ENCODE measurements at regions of chr12 and their contacts with region 1.

Region 1: DNA sequence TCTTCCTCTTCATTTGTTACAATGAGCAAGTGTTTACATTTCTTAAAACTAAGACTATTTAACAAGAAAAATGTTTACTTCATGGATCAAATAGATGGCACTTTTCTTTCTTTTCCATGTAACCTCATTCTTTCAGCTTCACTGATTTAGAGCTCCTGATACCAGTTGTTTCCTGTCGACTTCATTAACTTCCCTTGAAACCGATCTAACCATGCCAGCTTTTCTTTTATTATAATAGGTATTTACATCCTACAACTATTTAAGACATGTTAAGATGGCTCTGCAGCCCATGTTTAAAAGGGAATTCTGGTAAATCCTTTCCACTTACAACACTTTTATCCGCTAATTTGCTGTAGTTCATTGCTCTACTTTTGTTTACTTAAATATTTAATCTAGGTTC is 107.3 kb upstream of the DCN start:
- DNase-seq: no peak
- H3K4me3 ChIP-seq: no peak overlapping the region
- H3K4me3 Mint-ChIP-seq: no peak overlapping the region
- H3K27ac Mint-ChIP-seq: no peak overlapping the region
- H3K4me1 ChIP-seq: no peaks in the 10 kb centered on the region
- H3K4me1 Mint-ChIP-seq: no peaks in the 10 kb centered on the region
- H3K27me3 ChIP-seq: no peaks in the 10 kb centered on the region
- H3K27me3 Mint-ChIP-seq: no peaks in the 10 kb centered on the region
- CTCF ChIP-seq: no peak

Region 2: GRCh38 chr12:91326058-91327027 is 36.4 kb after region 1 on chr12:
- CTCF ChIA-PET with region 1: no interaction called
- POLR2A ChIA-PET with region 1: no interaction called
- intact Hi-C with region 1: loop called (anchors 5 kb)
- DNase-seq: peak; percentile 38 to 64
- H3K4me3 ChIP-seq: no peak overlapping the region
- H3K4me3 Mint-ChIP-seq: no peak overlapping the region
- H3K27ac Mint-ChIP-seq: no peak overlapping the region
- H3K4me1 ChIP-seq: no peaks in the 10 kb centered on the region
- H3K4me1 Mint-ChIP-seq: no peaks in the 10 kb centered on the region
- H3K27me3 ChIP-seq: no peaks in the 10 kb centered on the region
- H3K27me3 Mint-ChIP-seq: no peaks in the 10 kb centered on the region
- CTCF ChIP-seq: peak; percentile 62 to 65